ENCODE measurements at regions of chr12 and their contacts with region 1.

Region 1: DNA sequence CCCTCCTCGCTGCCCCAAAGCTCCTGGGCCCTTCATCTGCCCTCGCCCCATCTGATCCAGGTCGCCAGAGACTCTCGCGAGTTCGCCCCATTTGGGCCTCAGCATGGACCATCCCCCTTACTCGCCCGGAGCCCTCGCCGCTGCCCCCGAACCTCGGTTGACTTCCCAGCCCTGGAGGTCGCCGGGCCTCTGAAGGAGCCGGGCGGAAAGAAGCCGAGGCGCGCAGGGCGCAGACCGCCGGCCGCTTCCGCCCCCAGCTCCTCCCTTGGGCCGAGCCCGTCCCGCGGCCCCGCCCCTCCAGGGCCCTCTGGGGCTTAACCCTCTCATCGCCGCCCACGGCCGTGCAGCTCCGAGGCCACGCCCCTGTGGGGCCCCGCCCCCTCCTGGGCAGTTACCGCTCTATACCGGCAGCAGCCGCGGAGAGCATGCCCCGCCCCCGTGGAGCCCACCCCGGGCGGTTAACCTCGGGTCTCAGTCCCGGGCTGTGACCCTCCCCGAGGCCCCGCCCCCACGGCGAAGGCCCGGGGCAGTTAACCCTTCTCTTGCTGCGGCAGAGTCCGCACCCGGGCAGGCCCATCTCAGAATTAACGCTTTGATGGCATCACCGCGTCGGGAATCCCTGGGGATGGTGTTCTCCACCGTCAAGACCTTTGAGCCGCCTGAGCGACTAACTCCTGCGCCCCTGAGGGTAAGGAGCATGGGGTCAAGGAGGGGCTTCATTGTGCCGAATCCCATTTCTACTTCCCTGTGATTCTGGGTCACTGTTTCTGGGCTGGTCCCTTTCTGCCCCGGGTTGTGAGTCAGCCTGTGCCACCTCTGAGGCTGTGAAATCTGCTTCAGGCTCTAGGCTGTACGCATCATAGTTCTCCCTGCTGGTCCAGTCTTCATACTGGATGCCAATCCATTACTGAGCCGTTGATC is at the start of gene SPSB2:
- DNase-seq: peak; percentile 96 to 100 (median 99)
- ATAC-seq: peak; percentile 90
- H3K4me3 ChIP-seq: peak within 1 kb of the TSS; percentile 89 to 99
- H3K4me3 Mint-ChIP-seq: peak within 1 kb of the TSS; percentile 90
- H3K27ac ChIP-seq: peak within 1 kb of the TSS; percentile 77 to 83
- H3K27ac Mint-ChIP-seq: peak within 1 kb of the TSS; percentile 90
- H3K4me1 ChIP-seq: peaks cover 44% of the 10 kb centered on the region
- H3K4me1 Mint-ChIP-seq: peaks cover 47% of the 10 kb centered on the region
- H3K27me3 ChIP-seq: no peaks in the 10 kb centered on the region
- H3K27me3 Mint-ChIP-seq: no peaks in the 10 kb centered on the region
- CTCF ChIP-seq: no peak
- total RNA-seq, gene SPSB2: 2.6 to 3.0 TPM

Region 2: DNA sequence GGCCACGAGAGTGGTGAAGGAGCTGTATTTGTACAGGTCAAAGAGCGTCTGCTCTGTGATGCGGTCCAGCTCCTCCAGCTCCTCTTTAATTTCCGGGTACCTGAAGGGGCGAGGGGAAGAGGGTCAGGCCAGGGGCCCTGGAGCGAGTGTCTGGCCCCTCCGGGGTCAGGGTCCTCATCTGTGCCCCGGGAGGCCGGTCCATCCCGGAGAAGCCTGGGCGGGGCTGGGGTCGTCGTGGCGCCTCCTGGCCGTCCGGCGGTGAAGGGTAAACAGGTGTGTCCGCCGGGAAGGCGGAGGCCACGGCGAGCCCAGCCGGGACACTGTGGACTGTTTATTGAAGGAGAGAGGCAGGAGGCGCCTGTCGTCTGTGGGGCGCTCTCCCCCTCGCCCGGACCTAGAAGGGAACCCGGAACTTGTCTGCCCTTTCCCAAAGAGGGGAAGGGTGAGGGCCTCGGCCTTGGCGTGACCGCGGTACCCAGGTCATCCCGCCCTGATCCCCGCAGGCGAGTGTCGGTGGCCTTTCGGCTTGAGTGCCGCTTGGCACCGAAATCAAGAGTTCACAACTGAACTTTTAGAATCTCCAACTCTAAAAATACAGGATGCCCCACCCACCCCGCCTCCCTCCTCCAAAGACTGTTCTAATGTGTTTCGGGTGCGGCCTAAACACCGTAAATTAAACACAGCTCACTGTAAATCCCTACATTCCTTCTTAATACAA is 509.6 kb before region 1 on chr12:
- CTCF ChIA-PET with region 1: no interaction called
- POLR2A ChIA-PET with region 1: no interaction called
- intact Hi-C with region 1: no loop called
- DNase-seq: peak in 6 of 9 experiments; percentile 24 to 67 (median 36)
- ATAC-seq: peak; percentile 39
- H3K4me3 ChIP-seq: peak overlapping the region; percentile 57 to 94
- H3K4me3 Mint-ChIP-seq: peak overlapping the region; percentile 86
- H3K27ac ChIP-seq: peak overlapping the region; percentile 43 to 69
- H3K27ac Mint-ChIP-seq: peak overlapping the region; percentile 91
- H3K4me1 ChIP-seq: peaks cover 39% of the 10 kb centered on the region
- H3K4me1 Mint-ChIP-seq: peaks cover 45% of the 10 kb centered on the region
- H3K27me3 ChIP-seq: no peaks in the 10 kb centered on the region
- H3K27me3 Mint-ChIP-seq: no peaks in the 10 kb centered on the region
- CTCF ChIP-seq: no peak

Region 3: DNA sequence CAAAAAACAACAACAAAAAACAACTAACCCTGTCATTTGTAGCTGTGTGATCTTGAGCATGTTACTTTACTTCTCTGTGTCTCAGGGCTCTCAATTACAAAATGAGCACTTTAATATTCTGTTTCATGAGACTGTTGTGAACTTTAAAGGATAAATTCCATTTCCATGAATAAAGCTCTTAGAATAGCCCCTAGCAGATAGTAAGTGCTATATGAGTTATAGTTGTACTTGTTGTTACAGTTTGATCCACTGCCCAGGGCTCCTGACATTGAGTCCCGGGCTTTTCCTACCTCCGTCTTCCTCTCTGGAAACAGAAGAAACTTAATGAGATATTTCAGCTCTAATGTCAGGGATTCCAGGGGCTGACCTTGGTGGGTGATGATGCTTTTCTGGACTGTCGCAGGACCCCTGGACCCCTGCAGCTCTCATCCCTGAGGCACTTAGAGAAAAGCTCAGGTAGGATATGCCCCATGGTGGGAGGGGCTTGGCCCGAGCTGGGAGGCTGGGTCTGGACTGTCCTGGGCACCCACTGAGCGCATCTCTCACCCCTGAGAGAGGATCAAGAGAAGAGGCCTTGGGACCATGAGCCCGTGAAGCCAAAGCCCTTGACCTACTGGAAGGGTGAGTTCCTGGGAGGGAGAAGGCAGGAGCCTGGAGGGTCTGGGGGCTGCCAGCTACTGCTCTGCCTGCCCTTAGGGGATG is 40.0 kb before region 1 on chr12:
- CTCF ChIA-PET with region 1: interaction called, 24 read pairs
- POLR2A ChIA-PET with region 1: interaction called, 8 read pairs
- intact Hi-C with region 1: no loop called
- DNase-seq: no peak
- ATAC-seq: no peak
- H3K4me3 ChIP-seq: no peak overlapping the region
- H3K4me3 Mint-ChIP-seq: no peak overlapping the region
- H3K27ac ChIP-seq: no peak overlapping the region
- H3K27ac Mint-ChIP-seq: no peak overlapping the region
- H3K4me1 ChIP-seq: peaks cover 13% of the 10 kb centered on the region
- H3K4me1 Mint-ChIP-seq: peaks cover 13% of the 10 kb centered on the region
- H3K27me3 ChIP-seq: peaks cover 0 to 11% of the 10 kb centered on the region in 2 experiments
- H3K27me3 Mint-ChIP-seq: peaks cover 2% of the 10 kb centered on the region
- CTCF ChIP-seq: no peak

Region 4: DNA sequence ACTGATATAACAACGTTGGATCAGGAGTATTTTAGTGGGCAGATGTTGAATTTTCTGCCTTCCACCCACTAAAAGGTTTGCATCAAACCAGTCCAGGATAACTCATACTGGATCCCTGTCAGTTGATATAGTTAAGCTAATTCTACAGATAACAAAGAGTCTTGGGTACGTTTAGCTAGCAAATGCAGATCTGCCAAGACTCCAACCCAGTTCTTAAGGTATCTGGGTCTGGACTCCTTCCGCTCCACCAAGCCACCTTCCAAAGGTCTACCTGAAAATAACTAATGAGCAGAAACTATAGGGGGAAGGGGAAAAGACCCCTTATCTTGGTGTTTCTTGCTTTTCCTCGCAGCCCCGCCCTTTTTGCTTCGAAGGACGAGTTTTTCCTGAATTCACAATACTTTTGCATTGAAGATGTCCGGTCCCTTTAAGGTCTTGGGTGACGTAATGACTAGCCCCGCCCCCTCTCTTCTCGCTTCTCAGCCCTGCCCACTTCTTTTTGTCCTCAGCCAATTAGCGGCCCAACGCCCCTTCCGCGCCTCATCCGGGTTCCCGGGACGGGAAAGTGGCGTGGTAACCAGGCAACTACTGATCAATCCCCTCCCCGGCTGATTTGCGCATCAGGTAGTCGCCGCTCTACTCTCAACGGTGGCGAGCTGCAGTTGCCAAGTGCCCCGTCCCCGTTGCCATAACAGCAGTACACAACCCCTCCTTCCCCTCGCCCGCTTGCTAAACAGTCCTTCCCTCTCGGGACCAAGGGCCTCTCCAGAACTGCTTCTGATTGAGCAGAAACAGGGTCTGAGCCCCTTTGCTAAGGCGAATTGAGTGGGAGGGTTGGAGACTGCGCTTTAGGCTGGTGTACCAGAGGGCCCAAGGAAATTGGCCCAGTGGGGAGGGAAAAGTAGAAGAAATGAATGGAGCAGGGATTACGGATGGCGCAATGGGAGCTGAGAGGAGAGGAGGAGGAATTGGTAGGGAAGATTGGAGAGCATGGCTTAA is 31.2 kb after region 1 on chr12 and contains the start of gene LRRC23:
- CTCF ChIA-PET with region 1: interaction called, 10 read pairs
- POLR2A ChIA-PET with region 1: interaction called, 8 read pairs
- intact Hi-C with region 1: loop called (anchors 1 kb)
- DNase-seq: peak; percentile 92 to 99 (median 97)
- ATAC-seq: peak; percentile 96
- H3K4me3 ChIP-seq: peak within 1 kb of the TSS; percentile 56 to 64
- H3K4me3 Mint-ChIP-seq: peak within 1 kb of the TSS; percentile 5
- H3K27ac ChIP-seq: peak within 1 kb of the TSS; percentile 86 to 88
- H3K27ac Mint-ChIP-seq: no peak within 1 kb of the TSS
- H3K4me1 ChIP-seq: peaks cover 15% of the 10 kb centered on the region
- H3K4me1 Mint-ChIP-seq: no peaks in the 10 kb centered on the region
- H3K27me3 ChIP-seq: no peaks in the 10 kb centered on the region
- H3K27me3 Mint-ChIP-seq: no peaks in the 10 kb centered on the region
- CTCF ChIP-seq: no peak
- total RNA-seq, gene LRRC23: 6.5 to 7.2 TPM

Region 5: GRCh38 chr12:6937481-6938297 is 64.3 kb after region 1 on chr12:
- CTCF ChIA-PET with region 1: interaction called, 75 read pairs
- POLR2A ChIA-PET with region 1: interaction called, 45 read pairs
- intact Hi-C with region 1: loop called in 1 of 2 experiments (anchors 1 kb)
- DNase-seq: peak; percentile 84 to 99 (median 92)
- ATAC-seq: peak; percentile 91
- H3K4me3 ChIP-seq: peak overlapping the region; percentile 60 to 91
- H3K4me3 Mint-ChIP-seq: peak overlapping the region; percentile 83
- H3K27ac ChIP-seq: peak overlapping the region; percentile 89 to 91
- H3K27ac Mint-ChIP-seq: peak overlapping the region; percentile 96
- H3K4me1 ChIP-seq: peaks cover 25% of the 10 kb centered on the region
- H3K4me1 Mint-ChIP-seq: peaks cover 48% of the 10 kb centered on the region
- H3K27me3 ChIP-seq: no peaks in the 10 kb centered on the region
- H3K27me3 Mint-ChIP-seq: no peaks in the 10 kb centered on the region
- CTCF ChIP-seq: peak; percentile 90

Region 6: DNA sequence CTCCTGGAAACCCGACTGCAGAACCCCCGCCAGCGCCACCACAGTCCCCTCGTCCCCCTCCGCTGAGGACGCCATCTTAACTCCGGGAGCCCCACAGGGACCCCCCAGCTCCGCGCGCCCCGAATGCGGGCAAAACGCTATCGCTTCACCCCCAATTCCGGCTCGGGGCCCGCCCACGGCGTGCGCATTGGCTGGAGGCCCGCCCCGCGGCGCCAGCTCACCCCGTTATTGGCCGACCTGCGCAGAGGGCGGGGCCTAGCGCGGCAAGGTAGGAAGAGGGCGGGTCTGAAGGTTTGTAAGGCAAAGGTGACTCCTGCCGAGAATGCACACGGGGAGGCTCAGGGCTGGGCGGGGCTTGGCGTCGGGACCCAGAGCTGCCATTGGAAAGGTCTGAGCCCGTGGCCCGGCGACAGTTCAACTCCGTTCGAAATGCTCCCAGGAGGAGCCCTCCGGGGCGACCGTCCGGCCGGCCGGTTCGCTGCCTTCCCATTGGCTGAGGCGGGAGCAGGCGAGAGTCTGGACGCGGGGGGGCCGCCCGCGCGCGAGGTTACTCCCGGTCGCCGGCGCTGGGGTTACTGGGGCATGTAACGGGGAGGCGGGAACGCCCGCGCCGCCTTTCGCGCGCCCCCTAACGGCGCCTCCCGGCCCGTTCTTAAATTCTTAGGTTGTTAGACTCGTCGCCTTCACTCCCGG is 145.1 kb after region 1 on chr12 and contains the start of gene LPCAT3:
- CTCF ChIA-PET with region 1: interaction called, 5 read pairs
- POLR2A ChIA-PET with region 1: interaction called, 6 read pairs
- intact Hi-C with region 1: loop called (anchors 1 kb)
- DNase-seq: peak; percentile 94 to 99 (median 97)
- ATAC-seq: peak; percentile 97
- H3K4me3 ChIP-seq: peak within 1 kb of the TSS; percentile 82 to 99
- H3K4me3 Mint-ChIP-seq: peak within 1 kb of the TSS; percentile 90
- H3K27ac ChIP-seq: peak within 1 kb of the TSS; percentile 79 to 92
- H3K27ac Mint-ChIP-seq: peak within 1 kb of the TSS; percentile 88
- H3K4me1 ChIP-seq: peaks cover 13% of the 10 kb centered on the region
- H3K4me1 Mint-ChIP-seq: peaks cover 37% of the 10 kb centered on the region
- H3K27me3 ChIP-seq: no peaks in the 10 kb centered on the region
- H3K27me3 Mint-ChIP-seq: no peaks in the 10 kb centered on the region
- CTCF ChIP-seq: peak; percentile 85
- total RNA-seq, gene LPCAT3: 24.4 to 27.1 TPM

Region 7: DNA sequence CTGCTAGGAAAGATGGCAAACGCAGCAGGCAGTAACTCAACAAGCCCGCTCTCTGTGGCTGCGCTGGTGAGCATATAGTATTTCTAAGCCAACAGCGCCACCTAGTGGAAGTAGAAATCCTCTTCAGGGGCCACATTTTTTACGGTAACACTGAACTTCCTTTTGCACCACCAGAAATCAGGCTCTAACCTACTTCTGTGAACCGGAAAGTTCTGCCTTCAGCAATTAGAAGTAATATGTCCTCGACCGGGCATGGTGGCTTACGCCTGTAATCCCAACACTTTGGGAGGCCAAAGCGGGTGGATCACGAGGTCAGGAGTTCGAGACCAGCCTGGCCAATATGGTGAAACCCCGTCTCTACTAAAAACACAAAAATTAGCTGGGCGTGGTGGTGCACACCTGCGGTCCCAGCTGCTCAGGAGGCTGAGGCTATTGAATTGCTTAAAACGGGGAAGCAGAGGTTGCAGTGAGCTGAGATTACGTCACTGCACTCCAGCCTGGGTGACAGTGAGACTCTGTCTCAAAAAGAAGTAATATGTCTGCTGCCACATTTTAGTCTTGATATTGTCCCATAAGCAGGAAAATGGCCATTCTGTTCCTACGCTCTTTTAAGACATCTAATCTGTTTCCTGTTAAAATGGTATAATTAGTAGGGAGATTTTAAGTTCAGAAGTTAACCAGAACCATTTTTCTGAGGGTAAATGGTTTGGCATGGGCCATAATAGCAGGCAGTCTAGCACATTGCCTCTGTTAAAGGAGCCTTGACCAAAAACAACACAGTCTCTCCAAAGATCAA is 765.6 kb after region 1 on chr12:
- CTCF ChIA-PET with region 1: no interaction called
- POLR2A ChIA-PET with region 1: no interaction called
- intact Hi-C with region 1: loop called in 1 of 2 experiments (anchors 5 kb)
- DNase-seq: peak; percentile 40 to 89 (median 77)
- ATAC-seq: peak; percentile 67
- H3K4me3 ChIP-seq: peak overlapping the region; percentile 35 to 39
- H3K4me3 Mint-ChIP-seq: peak overlapping the region; percentile 69
- H3K27ac ChIP-seq: peak overlapping the region; percentile 30 to 40
- H3K27ac Mint-ChIP-seq: peak overlapping the region; percentile 73
- H3K4me1 ChIP-seq: peaks cover 32% of the 10 kb centered on the region
- H3K4me1 Mint-ChIP-seq: peaks cover 38% of the 10 kb centered on the region
- H3K27me3 ChIP-seq: no peaks in the 10 kb centered on the region
- H3K27me3 Mint-ChIP-seq: peaks cover 4% of the 10 kb centered on the region
- CTCF ChIP-seq: peak; percentile 79